ENCODE measurements at regions of chr2 and their contacts with region 1.

Region 1: DNA sequence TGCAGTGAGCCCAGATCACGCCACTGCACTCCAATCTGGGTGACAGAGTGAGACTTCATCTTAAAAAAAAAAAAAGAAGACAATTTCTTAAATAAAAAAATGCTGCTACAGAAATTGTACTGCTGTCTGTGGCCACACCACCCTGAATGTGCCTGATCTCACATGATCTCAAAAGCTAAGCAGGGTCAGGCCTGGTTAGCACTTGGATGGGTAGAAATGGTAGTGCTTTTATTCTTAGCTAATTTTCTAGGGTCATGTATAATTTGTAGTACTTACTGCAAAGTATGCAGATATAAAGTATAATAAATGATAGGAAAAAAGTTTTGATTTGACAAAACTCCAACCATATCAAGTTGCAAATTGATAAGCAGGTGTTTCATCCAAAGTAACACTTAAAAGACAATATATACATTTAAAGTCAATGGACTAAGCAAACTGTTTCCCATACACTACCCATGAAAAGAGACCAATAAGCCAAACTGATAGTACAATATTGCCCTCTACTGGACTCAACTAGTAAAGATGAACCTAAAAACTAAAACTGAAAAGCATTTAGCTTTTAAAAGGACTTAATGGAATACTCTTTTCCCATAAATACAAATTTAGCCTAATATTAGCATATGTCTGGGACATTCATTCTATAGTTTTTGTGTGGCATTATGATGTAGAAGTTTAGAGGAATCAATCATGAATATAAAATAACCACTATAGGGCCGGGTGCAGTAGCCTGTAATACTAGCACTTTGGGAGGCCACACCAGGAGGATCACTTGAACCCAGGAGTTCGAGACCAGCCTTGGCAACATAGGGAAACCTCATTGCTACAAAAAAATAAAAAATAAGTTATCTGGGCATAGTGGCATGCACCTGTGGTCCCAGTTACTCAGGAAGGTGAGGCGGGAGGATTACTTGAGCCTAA is 18.6 kb upstream of the PEX13 start:
- DNase-seq: no peak
- ATAC-seq: peak; percentile 80
- H3K4me3 ChIP-seq: no peak overlapping the region
- H3K27ac ChIP-seq: no peak overlapping the region
- H3K4me1 ChIP-seq: peaks cover 0 to 2% of the 10 kb centered on the region in 2 experiments; a peak in 3 of 4 replicates
- H3K27me3 ChIP-seq: no peaks in the 10 kb centered on the region
- CTCF ChIP-seq: peak; percentile 45 to 81 (median 74); a peak in 5 of 6 replicates
- POLR2A ChIP-seq: no peak
- RAD21 ChIP-seq: peak; percentile 87

Region 2: DNA sequence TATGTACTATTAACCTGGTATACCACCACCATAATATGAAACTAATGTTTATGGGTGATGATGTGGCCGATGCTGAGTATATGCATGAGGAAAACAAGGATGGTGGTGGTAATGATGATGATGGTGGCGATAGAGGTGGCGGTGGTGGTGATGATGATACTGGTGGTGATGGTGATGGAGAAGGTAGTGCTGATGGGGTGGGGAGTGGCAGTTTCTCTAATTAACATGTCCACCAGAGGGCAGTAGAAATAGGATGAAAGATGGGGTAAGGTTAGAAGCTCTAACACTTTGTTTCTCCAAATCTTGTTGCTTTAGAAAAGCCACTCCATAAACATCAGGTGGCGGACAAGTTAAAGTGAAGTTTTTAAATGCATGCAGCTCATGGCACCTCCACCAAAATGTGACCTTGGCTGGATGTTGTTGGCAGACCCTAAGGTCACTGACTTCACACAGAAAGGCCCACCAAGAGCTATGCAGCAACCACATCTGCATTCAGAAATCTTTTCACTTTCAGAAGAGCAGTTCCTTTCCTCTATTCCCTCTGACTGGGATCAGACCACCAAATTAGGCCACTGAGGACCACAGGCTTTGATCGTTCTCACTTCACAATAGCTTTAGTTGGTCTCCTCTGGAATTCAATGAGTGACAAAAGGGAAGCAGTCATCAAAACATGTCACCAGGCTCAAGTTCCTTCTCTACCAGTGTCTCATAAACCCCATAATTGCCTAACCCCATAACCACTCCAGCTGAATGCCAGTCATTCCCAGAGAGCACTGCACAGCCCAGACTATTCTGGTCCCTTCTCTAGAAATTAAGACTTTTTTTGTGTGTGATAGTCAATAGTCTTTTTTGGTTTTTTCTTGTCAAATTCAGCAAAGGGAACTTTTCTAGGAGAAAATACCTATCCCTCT is 437.9 kb before region 1 on chr2:
- CTCF ChIA-PET with region 1: interaction called, 23 read pairs
- POLR2A ChIA-PET with region 1: no interaction called
- RAD21 ChIA-PET with region 1: no interaction called
- intact Hi-C with region 1: loop called (anchors 5 kb)
- DNase-seq: no peak
- ATAC-seq: peak; percentile 84
- H3K4me3 ChIP-seq: no peak overlapping the region
- H3K27ac ChIP-seq: no peak overlapping the region
- H3K4me1 ChIP-seq: no peaks in the 10 kb centered on the region
- H3K27me3 ChIP-seq: peaks cover 75% of the 10 kb centered on the region
- CTCF ChIP-seq: peak; percentile 38 to 69 (median 50); a peak in 5 of 6 replicates
- POLR2A ChIP-seq: no peak
- RAD21 ChIP-seq: peak; percentile 37; the same call in 1 of the 2 replicates

Region 3: GRCh38 chr2:60674524-60675165 is 324.2 kb before region 1 on chr2:
- CTCF ChIA-PET with region 1: interaction called, 19 read pairs
- POLR2A ChIA-PET with region 1: no interaction called
- RAD21 ChIA-PET with region 1: interaction called in 1 of 2 experiments, 4 read pairs
- intact Hi-C with region 1: no loop called
- DNase-seq: peak; percentile 65
- ATAC-seq: peak; percentile 100
- H3K4me3 ChIP-seq: no peak overlapping the region
- H3K27ac ChIP-seq: no peak overlapping the region
- H3K4me1 ChIP-seq: no peaks in the 10 kb centered on the region; a peak in 1 of 4 replicates
- H3K27me3 ChIP-seq: no peaks in the 10 kb centered on the region
- CTCF ChIP-seq: peak; percentile 71 to 96 (median 94)
- POLR2A ChIP-seq: no peak
- RAD21 ChIP-seq: peak; percentile 77

Region 4: DNA sequence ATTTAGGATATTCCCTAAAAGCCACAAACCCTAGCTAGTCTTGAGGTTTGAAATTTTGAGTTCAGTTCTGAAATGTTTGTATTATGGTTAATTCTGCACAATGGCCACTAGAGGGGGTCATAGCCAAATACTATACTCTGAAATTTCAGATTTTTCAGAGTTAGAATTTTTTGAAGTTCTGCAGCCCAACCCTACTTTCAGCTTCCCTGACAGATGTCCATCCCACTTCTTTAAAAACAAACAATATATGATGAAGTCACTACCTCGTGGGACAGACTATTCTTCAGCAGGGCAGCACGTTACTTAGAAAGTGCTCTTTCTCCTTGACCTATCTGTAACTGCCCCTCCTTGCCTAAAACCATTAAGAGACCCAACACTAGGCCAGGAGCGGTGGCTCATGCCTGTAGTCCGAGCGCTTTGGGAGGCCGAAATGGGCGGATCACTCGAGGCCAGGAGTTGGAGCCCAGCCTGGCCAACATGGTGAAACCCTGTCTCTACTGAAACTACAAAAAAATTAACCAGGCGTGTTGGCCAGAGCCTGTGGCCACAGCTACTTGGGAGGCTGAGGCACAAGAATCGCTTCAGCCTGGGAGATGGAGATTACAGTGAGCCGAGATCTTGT is 291.0 kb before region 1 on chr2:
- CTCF ChIA-PET with region 1: interaction called, 59 read pairs
- POLR2A ChIA-PET with region 1: no interaction called
- RAD21 ChIA-PET with region 1: interaction called in 1 of 2 experiments, 6 read pairs
- intact Hi-C with region 1: loop called (anchors 1 kb)
- DNase-seq: peak; percentile 10
- ATAC-seq: peak; percentile 59
- H3K4me3 ChIP-seq: no peak overlapping the region
- H3K27ac ChIP-seq: no peak overlapping the region
- H3K4me1 ChIP-seq: no peaks in the 10 kb centered on the region
- H3K27me3 ChIP-seq: no peaks in the 10 kb centered on the region
- CTCF ChIP-seq: peak; percentile 53 to 79 (median 62); a peak in 5 of 6 replicates
- POLR2A ChIP-seq: no peak
- RAD21 ChIP-seq: peak; percentile 77

Region 5: GRCh38 chr2:60794277-60794863 is 204.5 kb before region 1 on chr2:
- CTCF ChIA-PET with region 1: interaction called, 5 read pairs
- POLR2A ChIA-PET with region 1: no interaction called
- RAD21 ChIA-PET with region 1: interaction called in 1 of 2 experiments, 4 read pairs
- intact Hi-C with region 1: loop called (anchors 1 kb)
- DNase-seq: no peak
- ATAC-seq: no peak
- H3K4me3 ChIP-seq: no peak overlapping the region
- H3K27ac ChIP-seq: no peak overlapping the region
- H3K4me1 ChIP-seq: no peaks in the 10 kb centered on the region
- H3K27me3 ChIP-seq: no peaks in the 10 kb centered on the region
- CTCF ChIP-seq: peak; percentile 28 to 59 (median 46); a peak in 3 of 6 replicates
- POLR2A ChIP-seq: no peak
- RAD21 ChIP-seq: peak; percentile 66

Region 6: GRCh38 chr2:60806988-60807681 is 191.8 kb before region 1 on chr2:
- CTCF ChIA-PET with region 1: interaction called, 26 read pairs
- POLR2A ChIA-PET with region 1: no interaction called
- RAD21 ChIA-PET with region 1: interaction called, 3 to 4 read pairs
- intact Hi-C with region 1: loop called (anchors 1 kb)
- DNase-seq: no peak
- ATAC-seq: no peak
- H3K4me3 ChIP-seq: no peak overlapping the region
- H3K27ac ChIP-seq: no peak overlapping the region
- H3K4me1 ChIP-seq: no peaks in the 10 kb centered on the region
- H3K27me3 ChIP-seq: no peaks in the 10 kb centered on the region
- CTCF ChIP-seq: no peak
- POLR2A ChIP-seq: no peak
- RAD21 ChIP-seq: no peak

Region 7: GRCh38 chr2:60987041-60987440 is 11.8 kb before region 1 on chr2:
- CTCF ChIA-PET with region 1: interaction called, 14 read pairs
- POLR2A ChIA-PET with region 1: no interaction called
- RAD21 ChIA-PET with region 1: no interaction called
- intact Hi-C with region 1: no loop called
- DNase-seq: no peak
- ATAC-seq: no peak
- H3K4me3 ChIP-seq: no peak overlapping the region
- H3K27ac ChIP-seq: no peak overlapping the region
- H3K4me1 ChIP-seq: no peaks in the 10 kb centered on the region
- H3K27me3 ChIP-seq: no peaks in the 10 kb centered on the region
- CTCF ChIP-seq: no peak
- POLR2A ChIP-seq: no peak
- RAD21 ChIP-seq: no peak

Measured in HCT116 (cell line).